Activated B cell treated with CpG ODN at 0.5 μM for 24 hours (primary cell): ENCODE measurements at regions of chr6 and their contacts with region 1.

Region 1: GRCh38 chr6:119147101-119148053 is 68.9 kb upstream of the FAM184A start:
- DNase-seq: no peak
- ATAC-seq: peak; percentile 82
- H3K4me3 Mint-ChIP-seq: no peak overlapping the region
- H3K27ac Mint-ChIP-seq: no peak overlapping the region
- H3K4me1 Mint-ChIP-seq: peaks cover 8% of the 10 kb centered on the region
- H3K27me3 Mint-ChIP-seq: peaks cover 2% of the 10 kb centered on the region
- CTCF ChIP-seq: no peak

Region 2: GRCh38 chr6:119978274-119978889 is 831.0 kb after region 1 on chr6:
- CTCF ChIA-PET with region 1: no interaction called
- POLR2A ChIA-PET with region 1: no interaction called
- intact Hi-C with region 1: loop called (anchors 1 kb)
- DNase-seq: no peak
- ATAC-seq: peak; percentile 52
- H3K4me3 Mint-ChIP-seq: no peak overlapping the region
- H3K27ac Mint-ChIP-seq: no peak overlapping the region
- H3K4me1 Mint-ChIP-seq: no peaks in the 10 kb centered on the region
- H3K27me3 Mint-ChIP-seq: no peaks in the 10 kb centered on the region
- CTCF ChIP-seq: peak; percentile 21

Region 3: GRCh38 chr6:120378582-120379220 is 1231.3 kb after region 1 on chr6:
- CTCF ChIA-PET with region 1: no interaction called
- POLR2A ChIA-PET with region 1: no interaction called
- intact Hi-C with region 1: loop called (anchors 5 kb)
- DNase-seq: no peak
- ATAC-seq: peak; percentile 58
- H3K4me3 Mint-ChIP-seq: no peak overlapping the region
- H3K27ac Mint-ChIP-seq: no peak overlapping the region
- H3K4me1 Mint-ChIP-seq: no peaks in the 10 kb centered on the region
- H3K27me3 Mint-ChIP-seq: no peaks in the 10 kb centered on the region
- CTCF ChIP-seq: no peak